ENCODE measurements at regions of chr1 and their contacts with region 1.

Region 1: DNA sequence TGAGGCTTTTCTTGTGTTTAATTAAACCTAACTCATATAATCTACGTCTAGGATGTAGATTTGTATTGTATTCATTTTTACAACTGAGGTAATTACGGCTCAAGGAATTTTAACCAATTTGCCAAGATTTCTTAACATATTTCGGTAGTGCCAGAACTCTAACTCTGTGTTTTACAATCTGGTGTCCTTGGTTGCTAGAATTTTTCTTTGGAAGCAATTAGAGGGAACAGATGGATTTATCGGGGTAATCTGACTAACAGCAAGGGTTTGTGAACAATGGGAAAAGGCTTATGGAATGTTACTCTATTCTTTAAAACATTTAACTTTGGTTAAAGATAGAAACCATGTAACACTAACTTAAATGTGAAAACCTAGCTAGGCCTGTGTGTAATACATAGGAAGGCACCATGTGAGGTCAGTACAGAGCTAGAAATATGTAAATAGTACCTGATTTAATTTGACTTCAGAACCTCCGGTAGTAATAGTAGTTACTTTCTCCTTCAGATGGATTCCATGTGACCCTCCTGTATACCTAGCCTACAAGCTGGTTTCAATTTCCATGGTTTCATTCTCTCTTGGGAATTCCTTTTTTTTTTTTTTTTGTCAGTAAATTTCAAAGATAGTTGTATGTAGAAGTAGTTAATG is 1.2 kb downstream of the MTF2 start:
- DNase-seq: no peak
- H3K4me3 ChIP-seq: peak overlapping the region; percentile 64 to 92 (median 76)
- H3K27ac ChIP-seq: peak overlapping the region; percentile 75 to 94 (median 92)
- H3K4me1 ChIP-seq: peaks cover 33 to 64% (median 47%) of the 10 kb centered on the region in 6 donors
- H3K27me3 ChIP-seq: no peaks in the 10 kb centered on the region
- CTCF ChIP-seq: peak in 9 of 11 experiments; percentile 25 to 67 (median 45)
- POLR2A ChIP-seq: no peak

Region 2: DNA sequence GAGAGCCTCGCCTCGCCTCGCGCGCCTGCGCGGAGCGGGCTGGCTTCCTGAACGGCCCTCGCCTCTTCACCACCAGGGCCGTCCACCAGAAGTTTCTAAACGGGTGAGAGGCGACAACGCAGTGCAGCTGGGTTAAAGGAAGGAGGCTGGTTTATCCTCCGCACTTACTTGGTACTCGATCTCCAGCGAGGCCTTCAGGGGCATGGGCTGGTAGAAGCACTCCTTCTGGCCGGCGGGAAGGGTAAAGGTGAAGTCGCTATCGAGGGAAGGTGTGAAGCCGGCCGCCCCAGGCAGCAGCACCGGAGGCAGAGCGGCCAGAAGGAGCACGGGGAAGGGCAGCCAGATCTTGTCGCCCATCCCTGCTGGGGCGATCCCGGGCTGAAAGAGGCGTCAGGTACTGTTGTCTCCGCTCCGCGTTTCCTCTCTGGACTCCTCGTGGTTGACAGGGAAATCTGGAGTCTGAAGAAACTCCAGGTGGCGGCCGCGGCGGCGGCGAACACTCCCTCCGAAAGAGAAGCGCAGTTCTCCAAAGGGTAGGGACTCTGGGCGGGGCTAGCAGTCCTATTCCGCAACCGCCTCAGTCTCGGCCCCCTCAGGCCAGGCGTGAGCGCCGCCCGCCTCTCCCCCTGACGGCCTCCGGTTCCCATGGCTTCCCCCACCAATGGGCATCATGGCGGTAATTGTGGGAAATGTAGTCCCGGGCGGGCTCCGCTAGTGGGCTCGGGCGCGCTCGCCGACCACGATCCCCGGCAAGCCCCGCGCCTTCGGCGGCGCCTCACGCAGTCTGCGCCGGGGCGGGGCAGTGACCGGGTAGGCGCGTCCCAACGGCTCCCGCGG is 99.8 kb after region 1 on chr1 and contains the start of gene TMED5:
- intact Hi-C with region 1: loop called (anchors 10 kb)
- DNase-seq: peak; percentile 99
- H3K4me3 ChIP-seq: peak within 1 kb of the TSS; percentile 66 to 93 (median 90)
- H3K27ac ChIP-seq: peak within 1 kb of the TSS; percentile 95 to 100 (median 99)
- H3K4me1 ChIP-seq: peaks cover 29 to 68% (median 53%) of the 10 kb centered on the region in 6 donors
- H3K27me3 ChIP-seq: no peaks in the 10 kb centered on the region
- CTCF ChIP-seq: peak in 10 of 11 experiments; percentile 20 to 58 (median 45)
- POLR2A ChIP-seq: peak; percentile 22 to 96 (median 29)
- total RNA-seq, gene TMED5: 49.2 to 102 (median 54.6) TPM

Region 3: GRCh38 chr1:93262645-93263044 is 182.3 kb after region 1 on chr1:
- intact Hi-C with region 1: no loop called
- DNase-seq: no peak
- H3K4me3 ChIP-seq: no peak overlapping the region
- H3K27ac ChIP-seq: no peak overlapping the region
- H3K4me1 ChIP-seq: no peaks in the 10 kb centered on the region
- H3K27me3 ChIP-seq: no peaks in the 10 kb centered on the region
- CTCF ChIP-seq: no peak
- POLR2A ChIP-seq: no peak

Measured in spleen (tissue), 13 donors.